ENCODE measurements at regions of chr1 and their contacts with region 1.

Region 1: GRCh38 chr1:13748610-13749505 is 48.9 kb downstream of the PRDM2 start:
- DNase-seq: peak; percentile 99
- H3K4me3 Mint-ChIP-seq: peak overlapping the region; percentile 100
- H3K27ac Mint-ChIP-seq: peak overlapping the region; percentile 95
- H3K4me1 Mint-ChIP-seq: peaks cover 45% of the 10 kb centered on the region
- H3K27me3 Mint-ChIP-seq: no peaks in the 10 kb centered on the region

Region 2: GRCh38 chr1:13600762-13601453 is 147.9 kb before region 1 on chr1:
- intact Hi-C with region 1: no loop called
- DNase-seq: no peak
- H3K4me3 Mint-ChIP-seq: no peak overlapping the region
- H3K27ac Mint-ChIP-seq: no peak overlapping the region
- H3K4me1 Mint-ChIP-seq: no peaks in the 10 kb centered on the region
- H3K27me3 Mint-ChIP-seq: no peaks in the 10 kb centered on the region

Region 3: GRCh38 chr1:13699936-13700520 is 48.8 kb before region 1 on chr1 and contains the start of gene PRDM2:
- intact Hi-C with region 1: loop called (anchors 1 kb)
- DNase-seq: peak; percentile 90
- H3K4me3 Mint-ChIP-seq: peak within 1 kb of the TSS; percentile 87
- H3K27ac Mint-ChIP-seq: peak within 1 kb of the TSS; percentile 91
- H3K4me1 Mint-ChIP-seq: peaks cover 34% of the 10 kb centered on the region
- H3K27me3 Mint-ChIP-seq: peaks cover 2% of the 10 kb centered on the region
- total RNA-seq, gene PRDM2: 44.5 and 45.9 TPM in 2 replicates

Region 4: DNA sequence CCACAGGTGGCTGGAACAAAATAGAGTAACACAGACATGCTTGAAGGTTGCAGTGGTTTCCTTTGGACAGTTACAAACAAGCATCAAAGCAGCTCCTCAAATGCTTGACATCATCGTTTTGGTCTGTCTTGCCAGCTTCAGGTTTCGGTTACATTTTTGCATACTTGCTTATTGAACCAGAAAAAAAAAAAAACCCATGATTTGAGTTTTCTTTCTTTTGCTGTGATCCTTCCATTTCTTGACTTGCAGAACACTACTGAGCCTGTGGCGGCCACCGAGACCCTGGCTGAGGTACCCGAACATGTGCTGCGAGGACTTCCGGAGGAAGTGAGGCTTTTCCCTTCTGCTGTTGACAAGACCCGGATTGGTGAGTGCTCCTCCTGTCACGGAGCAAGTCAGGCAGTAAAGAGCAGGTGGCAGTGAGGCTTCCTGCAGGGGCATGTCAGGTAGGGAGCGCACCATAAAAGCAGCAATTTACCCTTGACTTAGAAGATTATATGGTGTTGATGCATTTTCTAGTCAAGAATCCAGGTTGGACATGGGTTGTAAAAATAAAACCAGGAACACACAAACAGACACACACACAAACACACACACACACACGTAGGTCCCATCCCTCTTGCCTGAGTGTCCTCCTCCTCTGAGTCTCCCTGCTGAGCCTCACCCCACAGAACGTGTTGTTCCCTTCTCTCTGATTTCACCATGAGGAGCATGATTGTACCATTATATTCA is 17.9 kb before region 1 on chr1:
- intact Hi-C with region 1: loop called (anchors 1 kb)
- DNase-seq: peak; percentile 95
- H3K4me3 Mint-ChIP-seq: peak overlapping the region; percentile 93
- H3K27ac Mint-ChIP-seq: peak overlapping the region; percentile 100
- H3K4me1 Mint-ChIP-seq: peaks cover 53% of the 10 kb centered on the region
- H3K27me3 Mint-ChIP-seq: no peaks in the 10 kb centered on the region

Region 5: GRCh38 chr1:13792419-13792818 is 43.6 kb after region 1 on chr1:
- intact Hi-C with region 1: loop called (anchors 5 kb)
- DNase-seq: no peak
- H3K4me3 Mint-ChIP-seq: no peak overlapping the region
- H3K27ac Mint-ChIP-seq: peak overlapping the region; percentile 39
- H3K4me1 Mint-ChIP-seq: peaks cover 21% of the 10 kb centered on the region
- H3K27me3 Mint-ChIP-seq: no peaks in the 10 kb centered on the region

Region 6: GRCh38 chr1:14039582-14040430 is 290.9 kb after region 1 on chr1:
- intact Hi-C with region 1: no loop called
- DNase-seq: no peak
- H3K4me3 Mint-ChIP-seq: no peak overlapping the region
- H3K27ac Mint-ChIP-seq: no peak overlapping the region
- H3K4me1 Mint-ChIP-seq: peaks cover 2% of the 10 kb centered on the region
- H3K27me3 Mint-ChIP-seq: no peaks in the 10 kb centered on the region